ENCODE measurements at regions of chr22 and their contacts with region 1.

Region 1: GRCh38 chr22:31272522-31273446 is 19.5 kb downstream of the PIK3IP1 start:
- H3K4me3 ChIP-seq: no peak overlapping the region
- H3K27ac ChIP-seq: no peak overlapping the region
- H3K4me1 ChIP-seq: no peaks in the 10 kb centered on the region
- CTCF ChIP-seq: no peak

Region 2: DNA sequence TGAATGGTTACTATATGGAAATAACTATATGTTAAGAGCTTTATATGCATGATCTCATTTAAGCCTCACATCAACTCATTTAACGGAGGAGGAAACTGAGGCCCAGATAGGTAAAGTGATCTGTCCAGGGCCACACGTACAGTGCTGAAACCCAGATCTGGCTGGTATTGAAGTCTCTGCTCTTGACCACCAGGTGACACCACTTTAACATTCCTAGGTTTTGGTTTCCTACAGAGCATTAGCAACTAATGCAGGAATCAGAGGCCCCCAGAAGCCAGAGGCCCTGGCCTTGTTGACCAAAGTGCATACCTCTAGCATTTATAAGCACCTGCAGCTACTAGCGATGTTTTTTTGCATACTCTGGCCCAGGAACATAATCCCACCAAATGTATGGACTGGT is 73.6 kb before region 1 on chr22:
- CTCF ChIA-PET with region 1: interaction called, 38 read pairs
- POLR2A ChIA-PET with region 1: no interaction called
- H3K4me3 ChIP-seq: no peak overlapping the region
- H3K27ac ChIP-seq: no peak overlapping the region
- H3K4me1 ChIP-seq: no peaks in the 10 kb centered on the region
- CTCF ChIP-seq: 0 out of 2 replicates have a peak, but pooled peaks have one; percentile 17

Region 3: DNA sequence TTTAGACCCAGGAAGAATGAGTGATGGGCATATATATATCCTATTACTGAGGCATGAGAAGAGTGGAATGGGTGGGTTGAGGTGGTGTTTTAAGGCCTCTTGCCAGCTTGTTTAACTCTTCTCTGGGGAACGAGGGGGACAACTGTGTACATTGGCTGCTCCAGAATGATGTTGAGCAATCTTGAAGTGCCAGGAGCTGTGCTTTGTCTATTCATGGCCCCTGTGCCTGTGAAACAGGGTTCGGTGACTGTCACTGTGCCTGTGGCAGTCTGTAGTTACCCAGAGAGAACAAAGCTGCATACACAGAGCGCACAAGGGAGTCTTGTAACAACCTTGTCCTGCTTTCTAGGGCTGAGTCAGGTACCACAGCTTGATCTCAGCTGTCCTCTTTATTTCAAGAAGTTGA is 49.0 kb before region 1 on chr22:
- CTCF ChIA-PET with region 1: interaction called, 32 read pairs
- POLR2A ChIA-PET with region 1: no interaction called
- H3K4me3 ChIP-seq: no peak overlapping the region
- H3K27ac ChIP-seq: no peak overlapping the region
- H3K4me1 ChIP-seq: peaks cover 12% of the 10 kb centered on the region
- CTCF ChIP-seq: no peak

Region 4: DNA sequence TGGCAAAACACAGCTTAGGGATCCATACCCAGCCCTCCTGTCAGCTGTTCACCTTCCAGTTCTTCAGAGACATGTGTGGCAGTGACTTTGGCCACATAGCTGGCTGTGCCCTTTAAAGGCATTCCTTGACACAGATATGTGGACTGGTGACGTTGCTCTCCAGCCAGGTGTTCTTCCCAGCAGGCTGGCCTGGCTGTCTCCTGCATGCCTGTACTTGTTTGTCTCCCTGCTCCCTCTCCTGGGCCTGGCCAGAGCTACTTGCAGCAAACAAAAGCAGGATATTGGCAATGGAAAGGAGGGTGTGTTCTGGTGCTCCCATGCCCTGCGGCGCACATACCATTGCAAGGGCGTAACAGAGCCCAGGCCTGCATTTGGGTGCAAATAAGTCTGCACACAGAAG is 18.8 kb before region 1 on chr22:
- CTCF ChIA-PET with region 1: interaction called, 46 read pairs
- POLR2A ChIA-PET with region 1: interaction called, 4 read pairs
- H3K4me3 ChIP-seq: no peak overlapping the region
- H3K27ac ChIP-seq: no peak overlapping the region; the same call in 1 of the 2 replicates
- H3K4me1 ChIP-seq: no peaks in the 10 kb centered on the region
- CTCF ChIP-seq: no peak

Region 5: DNA sequence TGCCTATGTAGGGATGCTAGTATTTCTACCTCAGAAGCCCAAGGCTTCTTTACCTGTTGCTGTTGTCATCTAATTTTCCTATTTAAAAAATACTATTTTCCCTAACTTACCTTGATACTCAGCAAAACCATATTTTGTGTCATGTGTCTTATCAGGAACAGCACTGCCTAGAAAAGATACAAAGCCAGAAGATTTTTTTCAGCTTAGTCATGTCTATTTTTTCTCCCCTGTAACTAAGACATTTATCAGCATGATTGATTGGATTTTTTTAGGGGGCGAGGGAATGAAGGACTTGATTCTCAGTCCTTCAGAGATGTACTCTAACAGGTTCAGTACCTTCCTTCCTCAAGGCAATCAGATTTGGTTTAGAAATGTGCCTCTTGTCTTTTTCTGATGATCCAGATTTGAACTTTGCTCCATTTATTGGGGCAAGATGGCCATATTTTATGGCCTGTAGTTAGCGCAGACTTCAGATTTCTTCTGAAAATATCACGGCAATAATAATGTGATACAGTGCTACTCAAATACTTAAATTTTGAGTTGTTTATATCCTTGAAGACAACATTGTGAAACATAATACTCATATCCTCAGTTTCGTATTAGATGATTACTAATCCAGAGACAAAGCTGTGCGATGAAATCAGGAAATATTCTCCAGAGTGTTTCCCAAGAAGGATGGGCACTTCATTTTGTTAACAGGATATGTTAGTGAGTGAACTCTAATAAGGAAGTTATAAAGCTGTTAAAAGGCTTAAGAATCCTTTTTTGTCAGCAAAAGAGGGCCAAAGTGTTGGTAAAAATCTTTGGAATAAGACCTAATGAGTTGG is 23.3 kb after region 1 on chr22:
- CTCF ChIA-PET with region 1: interaction called, 22 read pairs
- POLR2A ChIA-PET with region 1: interaction called, 7 read pairs
- H3K4me3 ChIP-seq: no peak overlapping the region
- H3K27ac ChIP-seq: no peak overlapping the region
- H3K4me1 ChIP-seq: peaks cover 11% of the 10 kb centered on the region; the same call in 1 of the 2 replicates
- CTCF ChIP-seq: no peak

Measured in HEK293 (cell line).